ENCODE measurements at regions of chr7 and their contacts with region 1.

Region 1: DNA sequence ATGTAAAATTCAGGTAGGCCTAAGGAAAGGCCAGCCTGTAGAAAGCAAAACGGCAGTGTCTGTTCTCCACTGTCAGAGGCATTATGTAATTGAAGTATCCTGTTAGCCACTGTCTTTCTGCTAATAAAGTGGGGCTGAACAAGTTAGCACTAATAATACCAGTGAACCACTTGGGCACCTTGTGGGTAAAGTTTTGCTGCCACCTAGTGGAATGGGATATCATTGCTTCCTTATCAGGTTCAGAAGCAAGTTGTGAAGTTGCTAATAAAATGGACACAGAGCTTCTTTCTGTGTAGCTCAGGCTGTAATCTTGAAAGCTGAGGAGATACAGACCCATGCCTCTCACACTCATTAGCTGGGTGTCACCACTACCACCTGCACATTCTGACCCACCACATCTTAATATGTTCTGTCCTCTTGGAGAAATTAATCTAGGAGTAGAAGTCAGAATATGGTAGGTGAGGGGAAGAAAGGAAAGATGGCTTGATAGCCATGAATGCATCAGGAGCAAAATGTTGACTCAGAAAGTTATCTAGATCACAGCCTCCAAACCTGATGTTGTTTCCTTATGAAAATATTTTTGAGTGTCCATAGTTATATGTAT is 175.1 kb downstream of the SEPTIN7 start:
- DNase-seq: peak; percentile 32
- H3K4me3 Mint-ChIP-seq: no peak overlapping the region
- H3K27ac Mint-ChIP-seq: no peak overlapping the region
- H3K4me1 Mint-ChIP-seq: peaks cover 4% of the 10 kb centered on the region
- H3K27me3 Mint-ChIP-seq: peaks cover 29% of the 10 kb centered on the region

Region 2: GRCh38 chr7:35424869-35425495 is 551.0 kb before region 1 on chr7:
- intact Hi-C with region 1: loop called (anchors 10 kb)
- DNase-seq: peak; percentile 17
- H3K4me3 Mint-ChIP-seq: no peak overlapping the region
- H3K27ac Mint-ChIP-seq: no peak overlapping the region
- H3K4me1 Mint-ChIP-seq: no peaks in the 10 kb centered on the region
- H3K27me3 Mint-ChIP-seq: peaks cover 12% of the 10 kb centered on the region

Region 3: GRCh38 chr7:35816514-35816913 is 159.4 kb before region 1 on chr7:
- intact Hi-C with region 1: no loop called
- DNase-seq: no peak
- H3K4me3 Mint-ChIP-seq: no peak overlapping the region
- H3K27ac Mint-ChIP-seq: no peak overlapping the region
- H3K4me1 Mint-ChIP-seq: peaks cover 61% of the 10 kb centered on the region
- H3K27me3 Mint-ChIP-seq: no peaks in the 10 kb centered on the region

Region 4: DNA sequence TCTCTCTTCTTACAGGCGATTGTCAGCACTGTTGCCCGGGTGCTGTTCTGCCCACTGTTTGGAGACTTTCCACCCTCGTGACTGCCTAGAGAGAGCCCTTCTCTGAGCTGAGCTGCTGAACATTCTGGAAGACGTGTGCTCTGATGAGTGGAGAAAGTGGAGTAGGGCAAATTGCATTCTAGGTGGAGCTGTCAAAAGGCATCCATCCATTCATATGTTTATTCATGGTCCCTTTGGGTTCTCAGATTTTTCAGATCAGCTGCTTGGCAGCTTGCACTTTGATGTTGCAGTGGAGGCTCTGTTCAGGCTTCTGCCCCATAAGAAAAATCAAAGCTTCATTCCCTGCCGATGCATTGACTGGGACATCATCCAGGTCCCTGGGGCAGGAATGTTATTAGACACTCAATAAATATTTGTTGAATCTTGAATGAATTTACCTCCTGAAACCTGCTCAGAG is 56.4 kb after region 1 on chr7:
- intact Hi-C with region 1: no loop called
- DNase-seq: no peak
- H3K4me3 Mint-ChIP-seq: no peak overlapping the region
- H3K27ac Mint-ChIP-seq: no peak overlapping the region
- H3K4me1 Mint-ChIP-seq: no peaks in the 10 kb centered on the region
- H3K27me3 Mint-ChIP-seq: peaks cover 13% of the 10 kb centered on the region

Measured in activated T-helper 1 cell treated with anti-CD3 and anti-CD28 coated beads, Interleukin-12 subunit alpha, Interleukin-12 subunit beta, Interleukin-2, Interleukin-4 antibody, amounts not matched to agents 30 ng/mL and 10 ng/mL and 1 ng/mL, durations not matched to agents 14 hours and 24 hours and 36 hours (primary cell).